Activated T-helper 2 cell treated with anti-CD3 and anti-CD28 coated beads, Interferon-gamma antibody, Interleukin-2, Interleukin-4, amounts not matched to agents 10 μg/mL and 5 μg/mL and 100 μg/mL, durations not matched to agents 14 hours and 24 hours and 36 hours (primary cell): ENCODE measurements at regions of chr6 and their contacts with region 1.

Region 1: GRCh38 chr6:90350689-90351554 is 54.3 kb upstream of the BACH2 start:
- DNase-seq: peak; percentile 35
- H3K4me3 Mint-ChIP-seq: no peak overlapping the region
- H3K27ac Mint-ChIP-seq: peak overlapping the region; percentile 89
- H3K4me1 Mint-ChIP-seq: peaks cover 47% of the 10 kb centered on the region
- H3K27me3 Mint-ChIP-seq: no peaks in the 10 kb centered on the region

Region 2: GRCh38 chr6:89829591-89830385 is 521.1 kb before region 1 on chr6 and contains the start of gene CASP8AP2:
- intact Hi-C with region 1: loop called (anchors 1 kb)
- DNase-seq: peak; percentile 93
- H3K4me3 Mint-ChIP-seq: peak within 1 kb of the TSS; percentile 98
- H3K27ac Mint-ChIP-seq: peak within 1 kb of the TSS; percentile 95
- H3K4me1 Mint-ChIP-seq: peaks cover 23% of the 10 kb centered on the region
- H3K27me3 Mint-ChIP-seq: no peaks in the 10 kb centered on the region
- total RNA-seq, gene CASP8AP2: 31.8 and 32.8 TPM in 2 replicates

Region 3: DNA sequence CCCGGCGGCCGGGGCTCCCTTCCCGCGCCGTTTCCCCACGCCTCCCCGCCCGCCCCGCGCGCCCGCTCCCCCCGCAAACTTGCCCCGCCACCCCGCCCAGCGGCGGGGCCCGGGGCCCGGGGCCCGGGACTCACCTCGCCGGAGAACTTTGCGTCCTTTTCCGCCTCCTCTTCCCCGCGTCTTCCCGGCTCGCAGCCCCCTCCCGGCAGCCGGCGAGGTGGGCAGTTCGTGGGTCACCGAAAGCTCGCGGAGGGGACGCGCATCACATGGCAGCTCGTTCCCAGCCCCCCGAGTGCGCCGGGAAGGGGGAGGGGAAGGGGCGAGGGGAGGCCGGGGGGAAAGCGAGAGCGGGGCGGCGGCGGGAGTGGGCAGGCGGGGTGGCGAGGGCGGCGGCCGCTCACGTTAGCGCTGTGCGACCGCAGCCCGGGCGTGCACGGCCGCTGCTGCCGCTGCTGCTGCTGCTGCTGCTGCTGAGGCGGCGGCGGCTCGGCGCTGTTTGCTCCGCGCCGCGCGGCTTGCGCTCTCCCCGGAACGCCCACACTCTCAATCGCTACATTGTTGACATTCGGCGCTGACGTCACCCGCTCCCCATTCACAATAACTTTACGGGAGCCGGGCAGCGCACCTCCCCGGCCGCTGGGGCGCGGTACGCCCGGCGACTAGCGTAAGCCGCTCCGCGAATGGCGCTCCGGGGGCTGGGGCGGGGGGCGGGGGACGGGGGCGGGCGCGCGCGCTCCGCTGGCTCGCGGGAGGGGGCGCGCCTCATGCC is 54.4 kb before region 1 on chr6 and contains the start of gene BACH2:
- intact Hi-C with region 1: loop called (anchors 2 kb)
- DNase-seq: peak; percentile 91
- H3K4me3 Mint-ChIP-seq: peak within 1 kb of the TSS; percentile 91
- H3K27ac Mint-ChIP-seq: peak within 1 kb of the TSS; percentile 86
- H3K4me1 Mint-ChIP-seq: peaks cover 50% of the 10 kb centered on the region
- H3K27me3 Mint-ChIP-seq: peaks cover 13% of the 10 kb centered on the region
- total RNA-seq, gene BACH2: 88.8 and 89.7 TPM in 2 replicates

Region 4: DNA sequence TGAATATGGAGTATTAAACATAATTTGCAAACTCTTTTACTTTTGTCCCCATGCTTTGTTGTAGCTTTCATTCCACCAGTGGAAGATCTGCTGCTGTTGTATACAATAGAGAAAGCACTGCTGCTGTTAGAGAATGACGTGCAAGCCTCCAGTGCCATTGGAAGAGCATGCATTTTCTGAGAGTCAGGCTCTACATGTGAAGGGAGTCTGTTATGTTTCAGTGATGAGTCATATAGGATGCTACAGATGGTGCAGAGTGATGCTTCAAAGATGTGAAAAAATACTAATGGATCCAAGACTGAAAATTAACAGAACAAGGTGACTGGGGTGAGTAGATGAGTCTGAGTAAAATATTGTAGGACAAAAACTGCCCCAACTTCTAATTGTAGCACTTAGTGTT is 31.9 kb before region 1 on chr6:
- intact Hi-C with region 1: loop called (anchors 1 kb)
- DNase-seq: no peak
- H3K4me3 Mint-ChIP-seq: no peak overlapping the region
- H3K27ac Mint-ChIP-seq: peak overlapping the region; percentile 74
- H3K4me1 Mint-ChIP-seq: peaks cover 25% of the 10 kb centered on the region
- H3K27me3 Mint-ChIP-seq: peaks cover 5% of the 10 kb centered on the region

Region 5: GRCh38 chr6:90369024-90369519 is 18.1 kb after region 1 on chr6:
- intact Hi-C with region 1: loop called (anchors 1 kb)
- DNase-seq: peak; percentile 29
- H3K4me3 Mint-ChIP-seq: no peak overlapping the region
- H3K27ac Mint-ChIP-seq: peak overlapping the region; percentile 62
- H3K4me1 Mint-ChIP-seq: peaks cover 30% of the 10 kb centered on the region
- H3K27me3 Mint-ChIP-seq: peaks cover 7% of the 10 kb centered on the region

Region 6: DNA sequence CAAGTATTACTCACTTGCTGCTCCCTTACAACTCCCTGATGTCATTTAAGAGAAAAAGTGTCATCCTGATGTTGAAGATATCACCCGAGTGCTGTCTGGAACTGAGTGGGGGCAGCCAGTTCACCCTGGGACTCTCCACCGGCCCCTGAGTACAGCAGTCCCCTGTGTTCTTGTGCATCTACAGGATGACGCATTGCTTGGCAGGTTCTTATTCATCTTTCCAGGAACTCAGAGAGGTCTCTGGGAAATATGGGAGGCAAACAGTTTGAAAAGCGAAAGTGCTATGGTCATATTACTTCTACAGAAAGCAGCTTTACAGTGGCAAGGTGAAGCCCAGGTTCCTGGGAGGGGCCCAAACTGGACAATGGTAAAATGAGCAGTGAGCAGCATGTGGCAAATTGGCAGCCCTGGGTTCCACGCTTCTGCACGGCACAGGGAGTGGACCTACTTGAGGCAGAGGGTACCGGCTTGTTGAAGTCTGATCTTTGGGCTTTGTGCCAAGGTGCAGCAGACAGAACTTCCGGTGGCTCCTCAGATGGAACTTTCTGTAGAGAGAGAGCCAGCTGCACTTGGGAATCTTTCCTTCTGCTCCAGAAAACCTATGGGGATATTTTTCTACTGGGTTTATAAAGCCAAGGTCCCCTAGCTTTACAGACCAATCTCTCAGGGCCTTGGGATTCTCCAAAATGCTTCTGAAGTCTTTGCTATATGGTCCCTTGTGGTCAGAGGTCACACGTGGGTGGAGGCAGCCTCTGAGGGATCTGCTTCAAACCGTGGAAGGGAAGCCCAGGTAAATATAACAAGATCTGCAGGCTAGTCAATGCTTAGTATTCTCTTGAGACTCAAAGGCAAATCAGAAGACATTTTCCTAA is 107.7 kb after region 1 on chr6:
- intact Hi-C with region 1: loop called (anchors 1 kb)
- DNase-seq: peak; percentile 68
- H3K4me3 Mint-ChIP-seq: peak overlapping the region; percentile 27
- H3K27ac Mint-ChIP-seq: peak overlapping the region; percentile 95
- H3K4me1 Mint-ChIP-seq: peaks cover 76% of the 10 kb centered on the region
- H3K27me3 Mint-ChIP-seq: no peaks in the 10 kb centered on the region

Region 7: GRCh38 chr6:90472744-90473143 is 121.8 kb after region 1 on chr6:
- intact Hi-C with region 1: loop called (anchors 1 kb)
- DNase-seq: peak; percentile 57
- H3K4me3 Mint-ChIP-seq: peak overlapping the region; percentile 72
- H3K27ac Mint-ChIP-seq: peak overlapping the region; percentile 93
- H3K4me1 Mint-ChIP-seq: peaks cover 94% of the 10 kb centered on the region
- H3K27me3 Mint-ChIP-seq: no peaks in the 10 kb centered on the region

Region 8: GRCh38 chr6:90715093-90715655 is 364.3 kb after region 1 on chr6:
- intact Hi-C with region 1: no loop called
- DNase-seq: no peak
- H3K4me3 Mint-ChIP-seq: no peak overlapping the region
- H3K27ac Mint-ChIP-seq: no peak overlapping the region
- H3K4me1 Mint-ChIP-seq: peaks cover 4% of the 10 kb centered on the region
- H3K27me3 Mint-ChIP-seq: peaks cover 12% of the 10 kb centered on the region